Activated CD4-positive, alpha-beta memory T cell treated with anti-CD3 and anti-CD28 coated beads, Interleukin-2, amount 10 ng/mL, durations not matched to agents 7 days and 5 days (primary cell): ENCODE measurements at regions of chr14 and their contacts with region 1.

Region 1: GRCh38 chr14:105086833-105087307 is 21.6 kb upstream of the GPR132 start:
- DNase-seq: peak; percentile 91
- H3K4me3 Mint-ChIP-seq: peak overlapping the region; percentile 71
- H3K27ac Mint-ChIP-seq: no peak overlapping the region
- H3K4me1 Mint-ChIP-seq: peaks cover 22% of the 10 kb centered on the region
- H3K27me3 Mint-ChIP-seq: peaks cover 10% of the 10 kb centered on the region

Region 2: DNA sequence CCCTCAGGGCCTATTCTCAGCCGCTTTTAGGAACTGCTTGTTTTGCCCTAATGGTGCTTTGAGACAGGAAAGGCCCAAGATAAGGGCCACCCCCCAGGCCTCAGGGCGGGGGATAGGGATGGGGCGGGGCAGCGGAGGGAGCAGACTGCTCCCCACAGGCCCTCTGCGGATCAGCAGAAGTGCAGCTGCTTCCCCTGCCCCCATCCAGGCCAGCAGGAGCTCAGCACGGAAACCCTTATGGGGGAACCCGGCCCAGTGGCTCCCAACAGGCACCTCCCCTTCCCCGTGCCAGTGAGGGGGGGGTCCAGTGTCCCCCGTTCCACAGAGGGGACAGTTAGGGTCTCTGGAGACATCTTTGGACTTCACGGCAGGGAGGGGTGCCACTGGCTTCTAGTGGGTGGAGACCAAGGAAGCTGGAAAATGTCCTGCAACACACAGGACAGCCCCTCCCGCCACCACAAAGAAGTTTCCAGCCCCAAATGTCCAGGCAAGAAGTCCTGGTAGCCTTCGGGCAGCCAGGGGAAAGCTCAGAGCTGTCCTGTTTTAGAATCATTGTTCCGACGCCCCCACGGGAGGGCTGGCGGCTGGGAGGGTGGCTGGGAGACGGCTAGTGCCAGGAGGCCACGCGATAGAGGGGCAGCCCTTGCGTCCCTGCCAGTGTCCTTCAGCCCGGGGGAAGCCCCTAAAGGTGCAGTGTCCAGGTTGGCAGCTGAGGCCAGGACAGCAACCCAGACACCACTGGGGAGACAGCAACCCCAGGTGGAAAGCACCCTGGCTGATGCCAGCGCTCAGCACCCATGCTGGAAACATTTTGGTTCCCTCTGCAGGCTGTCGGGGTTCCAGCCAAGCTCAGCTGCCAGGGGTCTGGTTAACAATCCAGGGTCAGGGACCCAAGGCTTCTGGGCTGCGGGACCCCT is 11.2 kb before region 1 on chr14:
- CTCF ChIA-PET with region 1: interaction called, 16 read pairs
- POLR2A ChIA-PET with region 1: interaction called, 12 read pairs
- DNase-seq: no peak
- H3K4me3 Mint-ChIP-seq: no peak overlapping the region
- H3K27ac Mint-ChIP-seq: no peak overlapping the region
- H3K4me1 Mint-ChIP-seq: peaks cover 34% of the 10 kb centered on the region
- H3K27me3 Mint-ChIP-seq: peaks cover 6% of the 10 kb centered on the region